Naive thymus-derived CD4-positive, alpha-beta T cell (primary cell): ENCODE measurements at regions of chr1 and their contacts with region 1.

Region 1: GRCh38 chr1:51192213-51192843 is 43.7 kb upstream of the RNF11 start:
- DNase-seq: peak in 8 of 9 donors; percentile 9 to 48 (median 32)
- ATAC-seq: peak; percentile 76
- H3K4me3 ChIP-seq: no peak overlapping the region
- H3K4me3 Mint-ChIP-seq: no peak overlapping the region
- H3K27ac ChIP-seq: no peak overlapping the region
- H3K27ac Mint-ChIP-seq: no peak overlapping the region
- H3K4me1 ChIP-seq: no peaks in the 10 kb centered on the region
- H3K4me1 Mint-ChIP-seq: no peaks in the 10 kb centered on the region
- H3K27me3 ChIP-seq: no peaks in the 10 kb centered on the region
- H3K27me3 Mint-ChIP-seq: peaks cover 0 to 17% (median 3%) of the 10 kb centered on the region in 5 donors

Region 2: GRCh38 chr1:50750021-50750619 is 442.2 kb before region 1 on chr1:
- CTCF ChIA-PET with region 1: no interaction called
- POLR2A ChIA-PET with region 1: no interaction called
- intact Hi-C with region 1: loop called in 1 of 2 experiments (anchors 1 kb)
- DNase-seq: no peak
- ATAC-seq: no peak
- H3K4me3 ChIP-seq: no peak overlapping the region
- H3K4me3 Mint-ChIP-seq: no peak overlapping the region
- H3K27ac ChIP-seq: no peak overlapping the region
- H3K27ac Mint-ChIP-seq: no peak overlapping the region
- H3K4me1 ChIP-seq: no peaks in the 10 kb centered on the region
- H3K4me1 Mint-ChIP-seq: peaks cover 0 to 7% (median 0%) of the 10 kb centered on the region in 7 donors
- H3K27me3 ChIP-seq: no peaks in the 10 kb centered on the region
- H3K27me3 Mint-ChIP-seq: no peaks in the 10 kb centered on the region

Region 3: GRCh38 chr1:50873458-50874187 is 318.7 kb before region 1 on chr1:
- CTCF ChIA-PET with region 1: interaction called, 9 read pairs
- POLR2A ChIA-PET with region 1: interaction called, 3 read pairs
- intact Hi-C with region 1: loop called (anchors 1 kb)
- DNase-seq: peak in 8 of 9 donors; percentile 7 to 45 (median 23)
- ATAC-seq: peak; percentile 84
- H3K4me3 ChIP-seq: peak overlapping the region; percentile 25
- H3K4me3 Mint-ChIP-seq: peak overlapping the region in 1 of 10 donors; percentile 54
- H3K27ac ChIP-seq: no peak overlapping the region
- H3K27ac Mint-ChIP-seq: no peak overlapping the region
- H3K4me1 ChIP-seq: no peaks in the 10 kb centered on the region
- H3K4me1 Mint-ChIP-seq: peaks cover 8 to 28% (median 14%) of the 10 kb centered on the region in 7 donors
- H3K27me3 ChIP-seq: no peaks in the 10 kb centered on the region
- H3K27me3 Mint-ChIP-seq: no peaks in the 10 kb centered on the region

Region 4: GRCh38 chr1:51296383-51297357 is 104.3 kb after region 1 on chr1:
- CTCF ChIA-PET with region 1: interaction called, 4 read pairs
- POLR2A ChIA-PET with region 1: no interaction called
- intact Hi-C with region 1: loop called (anchors 1 to 5 kb)
- DNase-seq: peak; percentile 25 to 82 (median 53)
- ATAC-seq: peak; percentile 86
- H3K4me3 ChIP-seq: peak overlapping the region; percentile 59
- H3K4me3 Mint-ChIP-seq: peak overlapping the region; percentile 30 to 82 (median 70)
- H3K27ac ChIP-seq: no peak overlapping the region
- H3K27ac Mint-ChIP-seq: peak overlapping the region in 2 of 9 donors; percentile 63 to 72
- H3K4me1 ChIP-seq: no peaks in the 10 kb centered on the region
- H3K4me1 Mint-ChIP-seq: peaks cover 0 to 28% (median 9%) of the 10 kb centered on the region in 7 donors
- H3K27me3 ChIP-seq: no peaks in the 10 kb centered on the region
- H3K27me3 Mint-ChIP-seq: no peaks in the 10 kb centered on the region